ENCODE measurements at regions of chr19 and their contacts with region 1.

Region 1: DNA sequence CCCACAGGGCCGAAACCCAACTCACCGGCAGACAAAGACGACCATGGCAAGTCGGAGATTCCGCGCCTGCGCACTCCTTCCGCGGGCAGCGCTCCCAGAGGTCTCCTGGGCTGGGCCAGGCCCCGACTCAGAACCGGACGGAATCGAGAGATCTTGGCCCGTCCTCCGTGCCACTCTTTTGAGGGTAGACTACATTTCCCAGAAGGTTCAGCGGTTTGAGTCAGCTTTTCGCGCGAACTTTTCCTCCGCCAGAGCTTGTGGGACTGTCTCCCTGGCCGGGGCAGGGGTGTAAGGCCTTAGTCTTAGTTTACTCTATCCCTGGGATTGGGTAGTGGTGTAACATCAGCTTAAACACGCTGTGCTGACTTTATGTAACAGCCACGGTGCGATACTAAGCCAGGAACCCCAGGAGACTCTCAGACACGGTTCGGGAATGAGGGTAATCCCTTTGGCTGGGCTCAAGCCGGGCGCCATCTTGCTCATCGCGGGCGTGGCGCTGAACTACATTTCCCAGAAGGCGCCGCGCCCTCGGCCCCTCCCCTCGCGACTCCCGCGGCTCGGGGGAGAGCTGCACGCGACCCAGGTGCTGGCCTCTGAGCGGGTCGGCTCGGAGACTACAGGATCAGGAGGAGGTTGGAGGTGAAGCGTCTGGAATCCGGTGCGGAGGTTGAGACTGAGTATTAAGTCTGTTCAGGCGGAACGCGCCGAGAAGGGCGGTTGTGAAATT is at the start of gene ZNF260:
- DNase-seq: peak; percentile 96
- H3K4me3 Mint-ChIP-seq: peak within 1 kb of the TSS; percentile 100
- H3K27ac Mint-ChIP-seq: peak within 1 kb of the TSS; percentile 98
- H3K4me1 Mint-ChIP-seq: peaks cover 16% of the 10 kb centered on the region
- H3K27me3 Mint-ChIP-seq: no peaks in the 10 kb centered on the region
- total RNA-seq, gene ZNF260: 3.7 to 5.4 TPM

Region 2: DNA sequence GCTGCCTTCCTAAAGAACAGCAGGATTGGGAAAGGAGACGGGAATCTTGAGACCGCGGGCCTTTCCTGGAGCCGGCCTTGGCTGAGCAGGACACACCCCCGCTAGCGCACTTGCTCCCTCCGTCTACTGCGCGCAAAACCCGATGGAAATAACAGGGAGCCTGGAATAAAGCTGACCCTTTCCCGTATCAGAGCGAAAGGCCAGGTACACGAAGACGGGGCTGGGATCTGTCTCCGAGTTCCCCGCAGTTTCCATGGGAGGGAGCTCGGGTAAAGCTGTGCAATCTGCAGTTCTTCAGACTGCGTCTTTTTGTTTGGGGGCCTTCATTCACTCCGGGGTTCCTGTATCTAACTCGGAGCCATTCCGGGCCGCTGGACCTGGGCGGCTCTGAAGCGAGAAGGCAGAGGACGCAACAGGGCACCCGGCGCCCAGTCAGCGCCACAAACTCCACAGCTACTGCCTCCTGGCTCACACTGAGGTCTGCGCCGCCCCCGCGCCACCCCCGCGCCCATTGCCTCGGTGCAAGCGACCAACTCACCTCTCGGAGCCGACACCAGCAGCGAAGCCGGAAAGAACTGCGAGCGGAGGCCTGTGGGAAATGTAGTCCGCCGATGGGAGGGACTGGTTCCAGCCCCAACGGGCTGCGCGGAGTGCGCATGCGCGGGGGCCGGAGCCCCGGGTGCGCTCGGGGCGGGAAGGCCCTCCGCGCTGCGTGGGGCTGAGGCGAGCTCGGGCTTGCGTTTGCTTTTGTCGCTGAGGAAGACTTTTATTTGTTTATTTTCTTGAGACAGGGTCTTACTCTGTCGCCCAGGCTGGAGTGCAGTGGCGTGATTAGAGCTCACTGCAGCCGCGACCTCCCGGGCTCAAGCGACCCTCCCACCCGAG is 149.5 kb before region 1 on chr19 and contains the start of gene ZFP14:
- CTCF ChIA-PET with region 1: no interaction called
- intact Hi-C with region 1: loop called (anchors 1 kb)
- DNase-seq: peak; percentile 96
- H3K4me3 Mint-ChIP-seq: peak within 1 kb of the TSS; percentile 90
- H3K27ac Mint-ChIP-seq: peak within 1 kb of the TSS; percentile 84
- H3K4me1 Mint-ChIP-seq: peaks cover 10% of the 10 kb centered on the region
- H3K27me3 Mint-ChIP-seq: no peaks in the 10 kb centered on the region
- total RNA-seq, gene ZFP14: 2.2 to 3.1 TPM

Region 3: DNA sequence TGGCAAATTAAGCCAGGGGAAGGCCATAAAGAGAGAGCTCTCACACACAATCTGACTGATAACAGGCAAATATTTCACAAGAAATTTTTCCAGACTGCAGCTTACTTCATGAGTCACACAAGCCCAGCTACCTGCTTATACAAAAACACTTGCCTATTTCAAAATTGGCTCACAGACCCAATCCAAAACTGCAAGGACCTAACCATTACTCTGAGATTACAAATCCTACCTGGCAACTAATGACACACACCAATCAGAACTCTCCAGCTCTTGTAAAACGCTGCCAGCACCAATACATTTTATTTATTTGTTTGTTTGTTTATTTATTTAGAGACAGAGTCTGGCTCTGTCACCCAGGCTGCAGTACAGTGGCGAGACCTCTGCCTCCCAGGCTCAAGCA is 91.8 kb before region 1 on chr19:
- CTCF ChIA-PET with region 1: no interaction called
- intact Hi-C with region 1: no loop called
- DNase-seq: no peak
- H3K4me3 Mint-ChIP-seq: no peak overlapping the region
- H3K27ac Mint-ChIP-seq: no peak overlapping the region
- H3K4me1 Mint-ChIP-seq: no peaks in the 10 kb centered on the region
- H3K27me3 Mint-ChIP-seq: no peaks in the 10 kb centered on the region

Region 4: GRCh38 chr19:36514012-36514612 is 14.2 kb before region 1 on chr19:
- CTCF ChIA-PET with region 1: no interaction called
- intact Hi-C with region 1: no loop called
- DNase-seq: no peak
- H3K4me3 Mint-ChIP-seq: no peak overlapping the region
- H3K27ac Mint-ChIP-seq: no peak overlapping the region
- H3K4me1 Mint-ChIP-seq: no peaks in the 10 kb centered on the region
- H3K27me3 Mint-ChIP-seq: no peaks in the 10 kb centered on the region

Region 5: GRCh38 chr19:36573020-36573885 is 44.9 kb after region 1 on chr19 and contains the start of gene ZNF529:
- CTCF ChIA-PET with region 1: no interaction called
- intact Hi-C with region 1: loop called (anchors 1 kb)
- DNase-seq: peak; percentile 90
- H3K4me3 Mint-ChIP-seq: peak within 1 kb of the TSS; percentile 80
- H3K27ac Mint-ChIP-seq: peak within 1 kb of the TSS; percentile 85
- H3K4me1 Mint-ChIP-seq: peaks cover 20% of the 10 kb centered on the region
- H3K27me3 Mint-ChIP-seq: no peaks in the 10 kb centered on the region
- total RNA-seq, gene ZNF529: 17.1 to 18.3 TPM

Region 6: DNA sequence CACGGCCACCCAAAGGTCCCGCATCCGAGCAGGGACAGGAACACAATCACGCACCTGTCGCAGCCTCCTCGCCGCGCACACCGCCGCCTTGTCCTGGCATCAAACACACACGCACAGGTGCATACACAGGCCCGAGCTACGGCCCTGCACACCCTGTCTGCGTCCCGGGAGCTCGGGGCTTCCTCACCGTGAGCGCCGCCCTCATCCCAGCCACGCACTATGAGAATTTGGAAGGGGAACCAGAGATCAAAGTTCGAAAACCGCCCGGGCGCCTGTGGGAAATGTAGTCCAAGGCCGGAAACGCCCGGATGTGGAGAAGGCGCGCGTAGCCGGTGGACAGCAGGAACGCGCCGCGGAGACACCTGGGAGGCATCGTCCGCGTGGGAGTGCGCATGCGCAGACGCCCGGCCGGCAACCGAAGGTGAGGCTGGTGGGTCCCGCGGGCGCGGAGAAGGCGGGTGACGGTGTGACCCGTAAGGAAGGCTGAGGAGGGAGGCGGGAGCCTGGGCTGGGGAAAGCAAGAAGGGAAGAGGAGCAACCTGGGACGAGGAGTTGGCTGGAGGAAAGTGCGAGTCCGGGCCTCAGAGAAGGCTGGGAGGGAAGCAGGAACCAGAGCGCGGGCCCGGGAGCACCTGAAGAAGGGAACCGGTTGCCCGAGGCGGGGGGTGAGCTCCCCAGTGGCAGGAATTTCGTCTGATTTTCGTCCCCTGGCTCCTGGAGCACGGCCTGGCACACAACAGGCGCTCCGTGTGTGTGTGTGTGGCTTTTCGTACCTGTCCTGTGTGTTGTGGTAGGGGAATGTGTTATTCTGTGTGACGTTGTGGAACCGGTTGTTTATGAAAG is 159.1 kb after region 1 on chr19 and contains the start of gene ZNF567:
- CTCF ChIA-PET with region 1: no interaction called
- intact Hi-C with region 1: loop called (anchors 1 kb)
- DNase-seq: peak; percentile 98
- H3K4me3 Mint-ChIP-seq: peak within 1 kb of the TSS; percentile 88
- H3K27ac Mint-ChIP-seq: peak within 1 kb of the TSS; percentile 90
- H3K4me1 Mint-ChIP-seq: peaks cover 26% of the 10 kb centered on the region
- H3K27me3 Mint-ChIP-seq: no peaks in the 10 kb centered on the region
- total RNA-seq, gene ZNF567: 6.0 to 6.8 TPM

Region 7: GRCh38 chr19:36837906-36838783 is 309.8 kb after region 1 on chr19 and contains the start of gene ZNF790:
- CTCF ChIA-PET with region 1: no interaction called
- intact Hi-C with region 1: loop called (anchors 1 kb)
- DNase-seq: peak; percentile 92
- H3K4me3 Mint-ChIP-seq: no peak within 1 kb of the TSS
- H3K27ac Mint-ChIP-seq: peak within 1 kb of the TSS; percentile 54
- H3K4me1 Mint-ChIP-seq: peaks cover 7% of the 10 kb centered on the region
- H3K27me3 Mint-ChIP-seq: no peaks in the 10 kb centered on the region
- total RNA-seq, gene ZNF790: 4.9 to 5.2 TPM